Activated CD4-positive, alpha-beta memory T cell treated with anti-CD3 and anti-CD28 coated beads for 36 hours (primary cell): ENCODE measurements at regions of chr3 and their contacts with region 1.

Region 1: DNA sequence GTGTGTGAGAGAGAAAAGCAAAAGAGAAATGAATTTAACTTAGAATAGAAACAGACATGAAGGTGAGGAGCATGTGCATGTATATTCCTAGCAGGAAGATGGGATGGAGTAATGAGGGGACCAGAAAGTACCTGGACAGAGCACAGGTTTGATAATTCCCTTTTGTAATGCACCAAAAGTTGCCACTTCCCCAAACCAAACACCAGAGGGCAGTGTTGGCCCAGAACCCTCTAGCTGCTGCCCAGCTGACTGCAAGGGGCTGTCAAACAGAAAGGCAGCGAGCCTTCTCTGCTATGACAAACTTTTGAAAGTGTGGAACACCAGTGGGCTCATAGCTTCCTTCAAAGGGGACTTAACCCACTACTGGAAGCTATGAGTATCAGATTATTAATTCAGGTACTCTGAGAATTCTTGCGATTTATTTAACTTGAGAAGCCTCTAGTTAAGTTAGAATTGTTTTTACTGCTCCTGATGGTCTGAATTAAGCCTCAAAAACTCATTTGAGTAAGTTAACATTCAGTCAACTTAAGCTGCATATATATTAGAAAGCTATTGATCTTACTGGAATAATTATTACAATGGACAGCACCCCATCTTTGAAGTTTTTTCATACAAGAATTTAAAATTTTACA is 234.9 kb downstream of the NEK10 start:
- DNase-seq: peak; percentile 69
- H3K4me3 Mint-ChIP-seq: no peak overlapping the region
- H3K27ac Mint-ChIP-seq: no peak overlapping the region
- H3K4me1 Mint-ChIP-seq: no peaks in the 10 kb centered on the region
- H3K27me3 Mint-ChIP-seq: peaks cover 2% of the 10 kb centered on the region

Region 2: DNA sequence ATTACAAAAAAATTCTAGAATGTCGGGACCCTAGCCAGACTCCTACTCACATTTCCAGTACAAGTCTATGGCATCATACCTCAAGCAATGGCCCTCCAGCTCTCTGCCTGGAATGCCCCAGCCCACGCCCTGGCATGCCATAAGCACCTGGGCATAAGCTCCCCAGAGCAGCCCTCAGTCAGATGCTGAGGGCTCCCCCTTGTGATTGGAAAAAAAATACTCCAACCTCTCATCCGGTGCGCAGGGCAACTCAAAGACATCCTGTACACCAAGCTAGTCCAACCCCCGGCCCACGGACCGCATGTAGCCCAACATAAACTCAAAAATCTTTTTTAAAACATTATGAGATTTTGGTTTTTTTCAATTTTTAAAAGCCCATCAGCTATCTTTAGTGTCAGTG is 119.5 kb after region 1 on chr3:
- CTCF ChIA-PET with region 1: interaction called, 20 read pairs
- POLR2A ChIA-PET with region 1: no interaction called
- intact Hi-C with region 1: loop called (anchors 1 kb)
- DNase-seq: peak; percentile 29
- H3K4me3 Mint-ChIP-seq: no peak overlapping the region
- H3K27ac Mint-ChIP-seq: no peak overlapping the region
- H3K4me1 Mint-ChIP-seq: no peaks in the 10 kb centered on the region
- H3K27me3 Mint-ChIP-seq: peaks cover 4% of the 10 kb centered on the region

Region 3: DNA sequence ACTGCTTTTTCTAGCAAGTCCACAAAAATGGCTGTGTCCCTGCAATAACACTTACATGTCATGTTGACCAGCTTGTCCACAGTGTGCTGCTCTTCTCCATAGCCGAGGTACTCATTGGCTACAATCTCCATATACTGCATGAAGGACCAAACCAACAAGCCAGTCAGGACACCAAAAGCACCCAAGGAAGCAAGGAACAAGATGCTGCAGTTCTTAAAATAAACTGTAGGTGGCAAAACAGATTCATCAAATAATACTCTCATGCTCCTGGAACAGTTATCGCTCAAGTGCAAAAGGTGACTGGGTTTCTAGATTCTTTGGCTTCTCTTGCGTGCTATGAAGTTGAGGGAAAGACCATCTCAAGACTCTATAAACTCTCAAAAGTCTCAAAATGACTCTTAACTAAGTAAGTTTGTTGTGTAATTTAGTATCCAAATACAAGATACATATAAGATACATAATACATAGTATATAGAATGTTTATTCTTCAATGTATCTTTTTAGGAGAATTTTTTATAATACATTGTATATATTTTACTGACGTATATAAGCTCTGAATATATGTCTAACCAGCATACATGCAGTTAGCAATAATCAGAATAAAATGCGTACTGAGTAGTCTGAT is 177.9 kb after region 1 on chr3:
- CTCF ChIA-PET with region 1: no interaction called
- POLR2A ChIA-PET with region 1: no interaction called
- intact Hi-C with region 1: loop called (anchors 1 kb)
- DNase-seq: no peak
- H3K4me3 Mint-ChIP-seq: no peak overlapping the region
- H3K27ac Mint-ChIP-seq: no peak overlapping the region
- H3K4me1 Mint-ChIP-seq: no peaks in the 10 kb centered on the region
- H3K27me3 Mint-ChIP-seq: no peaks in the 10 kb centered on the region

Region 4: GRCh38 chr3:27467545-27467944 is 333.3 kb after region 1 on chr3:
- CTCF ChIA-PET with region 1: interaction called, 8 read pairs
- POLR2A ChIA-PET with region 1: no interaction called
- intact Hi-C with region 1: loop called (anchors 2 kb)
- DNase-seq: no peak
- H3K4me3 Mint-ChIP-seq: no peak overlapping the region
- H3K27ac Mint-ChIP-seq: peak overlapping the region; percentile 28
- H3K4me1 Mint-ChIP-seq: peaks cover 14% of the 10 kb centered on the region
- H3K27me3 Mint-ChIP-seq: no peaks in the 10 kb centered on the region